ENCODE measurements at regions of chr6 and their contacts with region 1.

Region 1: DNA sequence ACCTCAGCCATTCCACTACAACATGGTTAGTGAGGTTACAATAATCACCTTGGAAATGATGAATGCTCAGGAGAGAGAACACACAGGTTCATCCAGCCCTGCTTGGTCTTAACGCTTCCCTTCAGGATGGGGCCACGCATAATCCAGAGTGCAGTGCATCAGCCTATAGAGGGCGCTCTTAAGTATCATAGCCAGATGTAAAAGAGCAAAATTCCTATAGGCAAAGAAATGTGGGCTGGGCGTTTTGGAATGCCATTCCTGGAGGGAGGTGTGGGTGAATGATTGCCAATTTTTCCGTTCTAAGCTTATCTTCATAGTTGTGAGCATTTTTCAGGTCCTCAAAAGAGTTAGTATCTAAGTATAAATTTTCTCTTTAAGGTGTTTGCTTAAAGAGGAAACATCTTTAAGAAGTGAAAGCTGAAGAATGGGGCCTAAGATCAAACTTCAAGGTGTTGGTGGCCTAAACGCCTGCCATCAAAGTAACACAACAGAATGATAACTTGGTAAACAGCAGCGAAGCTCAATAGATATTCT is 1.8 kb downstream of the RIPOR2 start:
- DNase-seq: peak; percentile 67
- H3K4me3 Mint-ChIP-seq: peak overlapping the region; percentile 96
- H3K27ac Mint-ChIP-seq: peak overlapping the region; percentile 96
- H3K4me1 Mint-ChIP-seq: peaks cover 73% of the 10 kb centered on the region
- H3K27me3 Mint-ChIP-seq: no peaks in the 10 kb centered on the region

Region 2: GRCh38 chr6:24855395-24856245 is 78.3 kb before region 1 on chr6:
- CTCF ChIA-PET with region 1: interaction called, 100 read pairs
- intact Hi-C with region 1: loop called (anchors 1 kb)
- DNase-seq: peak; percentile 85
- H3K4me3 Mint-ChIP-seq: peak overlapping the region; percentile 36
- H3K27ac Mint-ChIP-seq: peak overlapping the region; percentile 95
- H3K4me1 Mint-ChIP-seq: peaks cover 56% of the 10 kb centered on the region
- H3K27me3 Mint-ChIP-seq: no peaks in the 10 kb centered on the region

Region 3: DNA sequence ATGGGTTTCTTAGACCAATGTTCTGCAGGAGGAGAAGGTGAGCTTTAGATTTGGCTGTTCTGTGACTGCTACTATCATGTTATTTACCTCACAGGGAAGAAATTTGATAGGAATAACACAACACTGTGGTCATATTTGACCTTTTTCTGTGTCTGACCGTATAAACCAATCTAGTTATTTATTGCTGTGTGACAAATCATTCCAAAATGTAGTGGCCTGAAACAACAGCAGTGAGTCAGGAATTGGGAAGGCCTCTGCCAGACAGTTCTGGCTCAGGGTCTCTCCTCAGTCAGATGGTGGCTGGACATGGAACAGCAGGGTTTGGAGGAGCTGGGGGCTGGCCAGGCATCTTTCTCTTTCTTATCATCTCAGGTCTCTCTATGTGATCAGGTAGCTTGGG is 31.2 kb before region 1 on chr6:
- CTCF ChIA-PET with region 1: interaction called, 32 read pairs
- intact Hi-C with region 1: loop called (anchors 1 kb)
- DNase-seq: no peak
- H3K4me3 Mint-ChIP-seq: no peak overlapping the region
- H3K27ac Mint-ChIP-seq: peak overlapping the region; percentile 84
- H3K4me1 Mint-ChIP-seq: peaks cover 90% of the 10 kb centered on the region
- H3K27me3 Mint-ChIP-seq: no peaks in the 10 kb centered on the region

Region 4: DNA sequence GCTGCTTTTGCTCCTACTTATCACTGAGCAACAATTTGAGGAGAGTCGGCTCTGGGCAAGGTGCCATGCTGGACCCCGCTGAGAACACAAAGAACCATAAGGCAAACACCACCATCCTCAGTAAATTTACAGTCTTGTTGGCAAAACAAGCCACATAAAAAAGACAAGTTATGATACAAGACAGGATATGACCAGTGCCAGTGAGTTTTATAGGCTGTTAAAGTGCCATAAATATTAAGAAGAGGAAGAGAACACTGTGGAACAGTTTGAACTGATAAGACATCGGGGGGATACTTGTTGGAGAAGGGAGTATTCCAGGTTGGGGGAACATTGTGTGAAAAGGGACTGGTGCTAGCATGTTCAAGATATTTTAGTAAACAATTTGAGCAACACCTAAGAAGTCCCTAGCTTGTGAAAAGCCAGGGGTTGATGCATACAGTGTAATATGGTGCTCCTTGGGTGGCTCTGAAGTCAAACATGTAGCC is 27.1 kb after region 1 on chr6:
- CTCF ChIA-PET with region 1: interaction called, 19 read pairs
- intact Hi-C with region 1: no loop called
- DNase-seq: no peak
- H3K4me3 Mint-ChIP-seq: peak overlapping the region; percentile 23
- H3K27ac Mint-ChIP-seq: peak overlapping the region; percentile 73
- H3K4me1 Mint-ChIP-seq: peaks cover 72% of the 10 kb centered on the region
- H3K27me3 Mint-ChIP-seq: no peaks in the 10 kb centered on the region

Region 5: DNA sequence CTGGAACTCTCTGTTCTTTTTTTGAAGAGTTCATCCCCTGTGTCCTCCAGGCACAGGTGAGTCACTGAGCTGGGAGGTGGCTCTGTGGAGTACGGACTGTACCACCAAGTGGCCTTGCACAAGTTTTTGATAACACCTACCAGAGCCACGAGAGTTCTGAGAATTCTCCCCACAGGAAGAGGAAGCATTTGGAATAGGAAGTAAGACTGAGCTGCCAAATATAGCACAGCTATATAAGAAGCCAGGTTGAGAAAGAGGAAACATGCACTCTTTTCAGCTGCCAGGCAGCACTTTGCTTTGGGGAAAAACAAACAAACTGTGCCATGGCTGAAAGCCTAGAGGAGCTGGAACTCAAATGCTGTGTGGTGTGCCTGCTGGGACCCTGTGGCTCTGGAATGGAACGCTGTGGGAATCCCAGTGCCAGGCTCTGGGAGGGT is 72.6 kb after region 1 on chr6:
- CTCF ChIA-PET with region 1: interaction called, 14 read pairs
- intact Hi-C with region 1: loop called (anchors 1 kb)
- DNase-seq: peak; percentile 72
- H3K4me3 Mint-ChIP-seq: peak overlapping the region; percentile 31
- H3K27ac Mint-ChIP-seq: peak overlapping the region; percentile 68
- H3K4me1 Mint-ChIP-seq: peaks cover 80% of the 10 kb centered on the region
- H3K27me3 Mint-ChIP-seq: no peaks in the 10 kb centered on the region

Region 6: GRCh38 chr6:25138237-25139125 is 204.5 kb after region 1 on chr6:
- CTCF ChIA-PET with region 1: no interaction called
- intact Hi-C with region 1: loop called (anchors 1 kb)
- DNase-seq: peak; percentile 82
- H3K4me3 Mint-ChIP-seq: peak overlapping the region; percentile 88
- H3K27ac Mint-ChIP-seq: peak overlapping the region; percentile 98
- H3K4me1 Mint-ChIP-seq: peaks cover 46% of the 10 kb centered on the region
- H3K27me3 Mint-ChIP-seq: no peaks in the 10 kb centered on the region

Region 7: DNA sequence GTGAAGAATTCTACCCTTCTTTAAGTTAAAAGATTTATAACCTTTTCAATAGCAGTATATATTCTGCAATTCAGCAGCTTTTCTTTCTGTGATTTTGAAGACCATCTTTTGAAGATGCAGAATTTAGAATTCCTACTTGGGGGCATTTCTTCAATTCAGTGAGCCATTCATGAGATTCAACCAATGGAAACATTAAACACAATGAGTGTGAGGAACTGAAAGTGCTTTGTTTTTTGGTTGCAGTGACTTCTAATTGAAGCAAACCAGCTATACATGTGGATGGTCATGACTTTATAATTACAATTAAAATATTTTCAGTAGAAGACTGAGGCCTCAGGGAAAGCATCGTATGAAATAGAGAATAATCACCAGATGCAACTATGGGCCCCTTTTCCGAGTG is 453.5 kb after region 1 on chr6:
- CTCF ChIA-PET with region 1: no interaction called
- intact Hi-C with region 1: no loop called
- DNase-seq: no peak
- H3K4me3 Mint-ChIP-seq: no peak overlapping the region
- H3K27ac Mint-ChIP-seq: no peak overlapping the region
- H3K4me1 Mint-ChIP-seq: peaks cover 22% of the 10 kb centered on the region
- H3K27me3 Mint-ChIP-seq: no peaks in the 10 kb centered on the region

Region 8: DNA sequence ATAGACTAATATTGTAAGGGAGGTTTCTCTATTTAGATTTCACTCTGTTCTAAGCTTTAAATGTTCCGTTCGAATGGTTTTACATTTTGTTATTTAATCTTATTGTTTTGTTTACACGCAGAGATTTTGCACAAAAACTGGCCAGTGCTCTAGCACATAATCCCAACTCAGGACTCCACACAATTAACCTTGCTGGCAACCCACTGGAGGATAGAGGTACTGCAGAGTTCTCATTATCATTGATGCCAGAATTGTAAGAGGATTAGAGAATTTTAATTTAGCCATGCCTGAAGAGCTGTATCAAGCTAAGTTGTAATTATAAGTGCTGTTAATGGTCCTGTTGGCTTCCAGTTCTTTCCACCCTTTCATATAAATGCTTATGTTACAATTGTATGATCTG is 538.4 kb after region 1 on chr6:
- CTCF ChIA-PET with region 1: no interaction called
- intact Hi-C with region 1: no loop called
- DNase-seq: no peak
- H3K4me3 Mint-ChIP-seq: no peak overlapping the region
- H3K27ac Mint-ChIP-seq: no peak overlapping the region
- H3K4me1 Mint-ChIP-seq: peaks cover 2% of the 10 kb centered on the region
- H3K27me3 Mint-ChIP-seq: no peaks in the 10 kb centered on the region

Measured in activated naive CD4-positive, alpha-beta T cell treated with anti-CD3 and anti-CD28 coated beads for 36 hours (primary cell).